HCT116 (cell line): ENCODE measurements at regions of chr1 and their contacts with region 1.

Region 1: GRCh38 chr1:205321164-205321958 is at the start of gene NUAK2:
- DNase-seq: peak; percentile 80
- ATAC-seq: peak; percentile 92
- H3K4me3 ChIP-seq: peak within 1 kb of the TSS; percentile 78 to 95
- H3K27ac ChIP-seq: peak within 1 kb of the TSS; percentile 77
- H3K4me1 ChIP-seq: peaks cover 44 to 62% of the 10 kb centered on the region in 2 experiments
- H3K27me3 ChIP-seq: no peaks in the 10 kb centered on the region
- CTCF ChIP-seq: peak in 2 of 3 experiments; percentile 14 to 29; a peak in 3 of 6 replicates
- POLR2A ChIP-seq: peak; percentile 68
- RAD21 ChIP-seq: no peak
- total RNA-seq, gene NUAK2: 3.0 TPM

Region 2: GRCh38 chr1:204915861-204916495 is 405.4 kb before region 1 on chr1:
- CTCF ChIA-PET with region 1: no interaction called
- POLR2A ChIA-PET with region 1: no interaction called
- RAD21 ChIA-PET with region 1: no interaction called
- intact Hi-C with region 1: no loop called
- DNase-seq: no peak
- ATAC-seq: no peak
- H3K4me3 ChIP-seq: no peak overlapping the region
- H3K27ac ChIP-seq: no peak overlapping the region
- H3K4me1 ChIP-seq: peaks cover 0 to 8% of the 10 kb centered on the region in 2 experiments; a peak in 1 of 4 replicates
- H3K27me3 ChIP-seq: no peaks in the 10 kb centered on the region
- CTCF ChIP-seq: no peak
- POLR2A ChIP-seq: no peak
- RAD21 ChIP-seq: no peak

Region 3: DNA sequence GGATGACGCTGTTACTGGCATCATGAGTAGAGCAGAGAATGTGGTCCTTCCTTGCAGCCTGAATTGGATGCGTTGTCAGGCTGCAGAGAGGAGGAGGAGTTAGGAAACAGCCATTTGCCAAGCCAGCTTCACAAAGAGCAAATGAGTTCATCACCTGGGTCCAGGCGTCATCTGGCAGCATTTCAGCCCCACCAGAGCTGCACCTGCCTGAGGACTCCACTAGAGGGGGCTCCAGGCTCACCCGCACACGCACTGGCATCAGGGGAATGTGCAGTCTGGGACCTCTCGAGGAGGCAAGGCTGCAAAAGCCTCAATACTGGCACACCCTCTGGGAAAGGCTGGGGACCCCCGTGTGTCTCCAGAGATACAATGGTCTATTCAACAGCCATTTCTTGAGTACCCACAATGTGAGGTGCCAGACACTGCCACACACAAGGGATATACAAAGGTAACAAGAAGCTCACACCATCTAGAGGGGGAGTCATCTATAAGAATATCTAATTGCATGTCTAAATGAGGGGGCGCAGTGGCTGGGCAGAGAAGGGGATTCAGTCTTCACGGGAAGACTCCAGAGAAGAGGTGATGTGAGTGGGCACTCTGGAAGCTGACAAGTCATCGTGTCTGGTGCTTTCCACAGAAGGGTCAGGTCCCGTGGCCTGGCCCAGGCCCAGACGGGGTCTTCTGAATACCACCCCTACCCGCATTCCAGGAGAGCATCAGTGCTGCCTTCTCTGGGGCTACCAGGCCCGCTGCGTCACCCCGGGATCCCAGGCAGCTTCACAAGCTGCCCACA is 331.9 kb before region 1 on chr1:
- CTCF ChIA-PET with region 1: interaction called, 6 read pairs
- POLR2A ChIA-PET with region 1: no interaction called
- RAD21 ChIA-PET with region 1: no interaction called
- intact Hi-C with region 1: loop called (anchors 5 kb)
- DNase-seq: peak; percentile 45
- ATAC-seq: peak; percentile 98
- H3K4me3 ChIP-seq: no peak overlapping the region
- H3K27ac ChIP-seq: no peak overlapping the region
- H3K4me1 ChIP-seq: no peaks in the 10 kb centered on the region
- H3K27me3 ChIP-seq: peaks cover 16% of the 10 kb centered on the region; the same call in 1 of the 2 replicates
- CTCF ChIP-seq: peak; percentile 96 to 99 (median 99)
- POLR2A ChIP-seq: no peak
- RAD21 ChIP-seq: peak; percentile 98

Region 4: GRCh38 chr1:205121660-205122488 is 199.5 kb before region 1 on chr1 and contains the start of gene RBBP5:
- CTCF ChIA-PET with region 1: no interaction called
- POLR2A ChIA-PET with region 1: no interaction called
- RAD21 ChIA-PET with region 1: no interaction called
- intact Hi-C with region 1: no loop called
- DNase-seq: peak; percentile 97
- ATAC-seq: peak; percentile 99
- H3K4me3 ChIP-seq: peak within 1 kb of the TSS; percentile 90 to 98
- H3K27ac ChIP-seq: peak within 1 kb of the TSS; percentile 70
- H3K4me1 ChIP-seq: peaks cover 7 to 22% of the 10 kb centered on the region in 2 experiments; a peak in 3 of 4 replicates
- H3K27me3 ChIP-seq: no peaks in the 10 kb centered on the region
- CTCF ChIP-seq: peak; percentile 72 to 96 (median 72)
- POLR2A ChIP-seq: peak; percentile 84
- RAD21 ChIP-seq: peak; percentile 48
- total RNA-seq, gene RBBP5: 24.5 TPM

Region 5: GRCh38 chr1:205227584-205228006 is 93.8 kb before region 1 on chr1 and contains the start of gene TMCC2:
- CTCF ChIA-PET with region 1: interaction called, 14 read pairs
- POLR2A ChIA-PET with region 1: interaction called, 4 read pairs
- RAD21 ChIA-PET with region 1: interaction called in 1 of 2 experiments, 3 read pairs
- intact Hi-C with region 1: no loop called
- DNase-seq: peak; percentile 74
- ATAC-seq: peak; percentile 90
- H3K4me3 ChIP-seq: peak within 1 kb of the TSS; percentile 54 to 67
- H3K27ac ChIP-seq: no peak within 1 kb of the TSS; the same call in 1 of the 2 replicates
- H3K4me1 ChIP-seq: peaks cover 11 to 28% of the 10 kb centered on the region in 2 experiments; a peak in 3 of 4 replicates
- H3K27me3 ChIP-seq: no peaks in the 10 kb centered on the region
- CTCF ChIP-seq: no peak
- POLR2A ChIP-seq: peak; percentile 34
- RAD21 ChIP-seq: no peak
- total RNA-seq, gene TMCC2: 2.7 TPM

Region 6: GRCh38 chr1:205335643-205336091 is 14.3 kb after region 1 on chr1:
- CTCF ChIA-PET with region 1: interaction called, 10 read pairs
- POLR2A ChIA-PET with region 1: interaction called, 3 read pairs
- RAD21 ChIA-PET with region 1: interaction called in 1 of 2 experiments, 3 read pairs
- intact Hi-C with region 1: no loop called
- DNase-seq: peak; percentile 79
- ATAC-seq: peak; percentile 99
- H3K4me3 ChIP-seq: no peak overlapping the region
- H3K27ac ChIP-seq: no peak overlapping the region
- H3K4me1 ChIP-seq: peaks cover 4 to 6% of the 10 kb centered on the region in 2 experiments; a peak in 3 of 4 replicates
- H3K27me3 ChIP-seq: no peaks in the 10 kb centered on the region
- CTCF ChIP-seq: peak; percentile 99 to 100 (median 99)
- POLR2A ChIP-seq: no peak
- RAD21 ChIP-seq: peak; percentile 94